HEK293 (cell line): ENCODE measurements at regions of chr7 and their contacts with region 1.

Region 1: GRCh38 chr7:120792091-120792860 is 65.7 kb downstream of the TSPAN12 start:
- H3K4me3 ChIP-seq: no peak overlapping the region
- H3K27ac ChIP-seq: no peak overlapping the region
- H3K4me1 ChIP-seq: no peaks in the 10 kb centered on the region
- CTCF ChIP-seq: peak; percentile 75

Region 2: GRCh38 chr7:120703585-120704240 is 88.6 kb before region 1 on chr7:
- CTCF ChIA-PET with region 1: no interaction called
- POLR2A ChIA-PET with region 1: no interaction called
- H3K4me3 ChIP-seq: no peak overlapping the region
- H3K27ac ChIP-seq: no peak overlapping the region
- H3K4me1 ChIP-seq: no peaks in the 10 kb centered on the region
- CTCF ChIP-seq: no peak

Region 3: GRCh38 chr7:120805636-120806388 is 13.5 kb after region 1 on chr7:
- CTCF ChIA-PET with region 1: interaction called, 45 read pairs
- POLR2A ChIA-PET with region 1: no interaction called
- H3K4me3 ChIP-seq: no peak overlapping the region
- H3K27ac ChIP-seq: no peak overlapping the region
- H3K4me1 ChIP-seq: peaks cover 7% of the 10 kb centered on the region; the same call in 1 of the 2 replicates
- CTCF ChIP-seq: peak; percentile 67

Region 4: GRCh38 chr7:120813089-120813488 is 20.8 kb after region 1 on chr7:
- CTCF ChIA-PET with region 1: interaction called, 45 read pairs
- POLR2A ChIA-PET with region 1: no interaction called
- H3K4me3 ChIP-seq: no peak overlapping the region
- H3K27ac ChIP-seq: peak overlapping the region; percentile 27
- H3K4me1 ChIP-seq: peaks cover 25% of the 10 kb centered on the region
- CTCF ChIP-seq: no peak

Region 5: GRCh38 chr7:120938991-120939744 is 146.9 kb after region 1 on chr7:
- CTCF ChIA-PET with region 1: interaction called, 11 read pairs
- POLR2A ChIA-PET with region 1: no interaction called
- H3K4me3 ChIP-seq: no peak overlapping the region
- H3K27ac ChIP-seq: no peak overlapping the region
- H3K4me1 ChIP-seq: no peaks in the 10 kb centered on the region
- CTCF ChIP-seq: no peak

Region 6: GRCh38 chr7:120944826-120945562 is 152.7 kb after region 1 on chr7:
- CTCF ChIA-PET with region 1: interaction called, 11 read pairs
- POLR2A ChIA-PET with region 1: no interaction called
- H3K4me3 ChIP-seq: no peak overlapping the region
- H3K27ac ChIP-seq: no peak overlapping the region
- H3K4me1 ChIP-seq: peaks cover 12% of the 10 kb centered on the region; the same call in 1 of the 2 replicates
- CTCF ChIP-seq: no peak

Region 7: DNA sequence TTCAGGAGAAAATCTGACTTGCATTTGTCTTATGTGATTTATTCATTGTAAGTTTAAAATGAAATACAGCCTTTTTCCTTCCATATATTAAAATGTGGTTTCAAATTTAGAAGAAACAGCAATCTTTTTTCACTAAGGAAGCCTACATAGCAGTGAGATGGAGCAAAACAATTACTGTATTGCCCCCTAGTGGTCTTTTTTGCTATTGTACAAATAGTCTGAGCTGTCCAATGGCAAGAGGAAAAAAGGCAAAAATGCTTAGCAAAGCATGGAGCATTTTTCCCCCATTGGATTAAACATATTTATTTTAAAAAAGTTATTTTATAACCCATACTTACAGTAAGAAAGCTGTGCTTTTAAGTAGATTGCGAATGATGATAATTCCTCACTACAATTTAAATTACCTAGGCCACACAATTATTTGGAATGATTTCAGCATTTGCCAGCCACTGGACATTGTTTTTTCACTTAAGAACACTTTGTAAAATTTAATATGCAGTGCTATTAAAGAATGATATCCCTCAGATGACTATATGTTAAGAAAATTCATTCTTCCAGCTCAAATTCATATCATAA is 315.7 kb after region 1 on chr7:
- CTCF ChIA-PET with region 1: interaction called, 12 read pairs
- POLR2A ChIA-PET with region 1: no interaction called
- H3K4me3 ChIP-seq: no peak overlapping the region
- H3K27ac ChIP-seq: no peak overlapping the region
- H3K4me1 ChIP-seq: peaks cover 2% of the 10 kb centered on the region
- CTCF ChIP-seq: no peak